ENCODE measurements at regions of chr14 and their contacts with region 1.

Region 1: DNA sequence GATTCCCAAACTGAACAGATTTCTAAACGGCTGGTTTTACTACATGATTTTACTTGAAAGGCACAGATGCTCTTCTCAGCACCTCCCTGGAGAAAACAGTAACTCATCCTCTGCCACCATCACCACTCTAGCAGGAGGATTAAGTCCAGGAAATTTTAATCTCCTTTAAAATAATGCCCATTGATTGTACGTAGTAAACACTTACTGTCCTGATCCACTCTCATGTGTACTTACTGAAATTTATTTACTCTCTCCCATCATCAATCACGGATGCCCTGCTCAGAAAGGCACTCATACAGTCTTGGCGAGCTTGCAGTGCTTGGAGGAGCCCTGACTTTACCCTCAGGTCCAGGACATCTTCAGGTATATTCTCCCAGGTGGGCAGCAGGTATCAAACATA is 239.8 kb upstream of the EGLN3 start:
- DNase-seq: no peak
- H3K4me3 ChIP-seq: no peak overlapping the region
- CTCF ChIP-seq: no peak
- POLR2A ChIP-seq: no peak

Region 2: DNA sequence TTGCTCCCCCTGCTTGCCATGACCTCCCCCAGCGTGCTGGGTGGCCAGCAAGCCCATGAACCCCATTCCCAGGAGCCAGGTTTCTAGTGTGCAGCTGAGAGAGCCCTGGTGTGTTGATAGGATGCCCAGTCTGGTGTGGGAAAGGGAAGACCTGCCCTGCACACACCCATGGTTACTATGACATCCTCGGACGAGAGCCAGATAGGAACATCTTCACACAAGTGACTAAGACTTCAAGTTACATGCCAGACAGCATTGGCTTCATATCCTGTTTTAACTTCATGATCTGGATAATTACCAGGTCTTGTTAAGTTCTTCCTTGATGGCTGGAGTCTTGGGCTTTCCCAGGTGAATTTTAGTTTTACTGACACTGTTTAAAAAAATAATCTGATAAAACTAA is 43.3 kb before region 1 on chr14:
- intact Hi-C with region 1: loop called (anchors 1 kb)
- DNase-seq: peak in 1 of 2 donors; percentile 79
- H3K4me3 ChIP-seq: no peak overlapping the region
- CTCF ChIP-seq: no peak
- POLR2A ChIP-seq: no peak

Measured in lower leg skin (tissue), 4 donors.